B cell (primary cell): ENCODE measurements at regions of chr3 and their contacts with region 1.

Region 1: GRCh38 chr3:67018105-67018788 is 20.1 kb downstream of the KBTBD8 start:
- DNase-seq: peak; percentile 17
- ATAC-seq: peak; percentile 24
- H3K4me3 ChIP-seq: peak overlapping the region in 1 of 5 experiments; percentile 37
- H3K4me3 Mint-ChIP-seq: peak overlapping the region; percentile 63
- H3K27ac ChIP-seq: peak overlapping the region; percentile 36 to 64
- H3K27ac Mint-ChIP-seq: peak overlapping the region; percentile 70
- H3K4me1 ChIP-seq: peaks cover 43 to 46% of the 10 kb centered on the region in 2 donors
- H3K4me1 Mint-ChIP-seq: peaks cover 54% of the 10 kb centered on the region
- H3K27me3 ChIP-seq: no peaks in the 10 kb centered on the region
- H3K27me3 Mint-ChIP-seq: no peaks in the 10 kb centered on the region
- CTCF ChIP-seq: no peak

Region 2: DNA sequence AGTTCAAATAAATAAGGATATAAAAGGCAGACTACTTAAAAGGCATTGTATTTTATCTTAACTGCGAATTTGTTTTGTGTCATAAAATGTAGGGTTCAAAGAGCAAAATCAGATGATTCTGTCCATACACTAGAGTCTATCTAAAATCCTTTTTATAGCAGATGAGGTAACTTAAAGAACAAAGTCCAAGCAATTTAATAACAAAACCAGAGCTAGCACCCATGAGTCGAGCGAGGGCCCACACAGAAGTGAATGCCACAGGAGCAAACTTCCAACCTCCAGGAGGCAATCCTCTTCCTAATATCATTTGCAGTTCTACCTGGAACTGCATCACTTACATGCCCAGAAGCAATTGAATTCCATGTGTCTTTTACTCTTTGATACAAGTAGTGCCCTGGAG is 55.6 kb before region 1 on chr3:
- CTCF ChIA-PET with region 1: no interaction called
- POLR2A ChIA-PET with region 1: no interaction called
- intact Hi-C with region 1: no loop called
- DNase-seq: no peak
- ATAC-seq: no peak
- H3K4me3 ChIP-seq: no peak overlapping the region
- H3K4me3 Mint-ChIP-seq: no peak overlapping the region
- H3K27ac ChIP-seq: no peak overlapping the region
- H3K27ac Mint-ChIP-seq: no peak overlapping the region
- H3K4me1 ChIP-seq: no peaks in the 10 kb centered on the region
- H3K4me1 Mint-ChIP-seq: no peaks in the 10 kb centered on the region
- H3K27me3 ChIP-seq: no peaks in the 10 kb centered on the region
- H3K27me3 Mint-ChIP-seq: peaks cover 17% of the 10 kb centered on the region
- CTCF ChIP-seq: no peak

Region 3: GRCh38 chr3:67006460-67006859 is 11.8 kb before region 1 on chr3:
- CTCF ChIA-PET with region 1: interaction called, 8 read pairs
- POLR2A ChIA-PET with region 1: interaction called, 4 read pairs
- intact Hi-C with region 1: loop called (anchors 1 kb)
- DNase-seq: no peak
- ATAC-seq: no peak
- H3K4me3 ChIP-seq: peak overlapping the region in 1 of 5 experiments; percentile 28
- H3K4me3 Mint-ChIP-seq: peak overlapping the region; percentile 63
- H3K27ac ChIP-seq: no peak overlapping the region
- H3K27ac Mint-ChIP-seq: peak overlapping the region; percentile 46
- H3K4me1 ChIP-seq: peaks cover 26 to 53% of the 10 kb centered on the region in 2 donors
- H3K4me1 Mint-ChIP-seq: peaks cover 79% of the 10 kb centered on the region
- H3K27me3 ChIP-seq: no peaks in the 10 kb centered on the region
- H3K27me3 Mint-ChIP-seq: no peaks in the 10 kb centered on the region
- CTCF ChIP-seq: no peak

Region 4: DNA sequence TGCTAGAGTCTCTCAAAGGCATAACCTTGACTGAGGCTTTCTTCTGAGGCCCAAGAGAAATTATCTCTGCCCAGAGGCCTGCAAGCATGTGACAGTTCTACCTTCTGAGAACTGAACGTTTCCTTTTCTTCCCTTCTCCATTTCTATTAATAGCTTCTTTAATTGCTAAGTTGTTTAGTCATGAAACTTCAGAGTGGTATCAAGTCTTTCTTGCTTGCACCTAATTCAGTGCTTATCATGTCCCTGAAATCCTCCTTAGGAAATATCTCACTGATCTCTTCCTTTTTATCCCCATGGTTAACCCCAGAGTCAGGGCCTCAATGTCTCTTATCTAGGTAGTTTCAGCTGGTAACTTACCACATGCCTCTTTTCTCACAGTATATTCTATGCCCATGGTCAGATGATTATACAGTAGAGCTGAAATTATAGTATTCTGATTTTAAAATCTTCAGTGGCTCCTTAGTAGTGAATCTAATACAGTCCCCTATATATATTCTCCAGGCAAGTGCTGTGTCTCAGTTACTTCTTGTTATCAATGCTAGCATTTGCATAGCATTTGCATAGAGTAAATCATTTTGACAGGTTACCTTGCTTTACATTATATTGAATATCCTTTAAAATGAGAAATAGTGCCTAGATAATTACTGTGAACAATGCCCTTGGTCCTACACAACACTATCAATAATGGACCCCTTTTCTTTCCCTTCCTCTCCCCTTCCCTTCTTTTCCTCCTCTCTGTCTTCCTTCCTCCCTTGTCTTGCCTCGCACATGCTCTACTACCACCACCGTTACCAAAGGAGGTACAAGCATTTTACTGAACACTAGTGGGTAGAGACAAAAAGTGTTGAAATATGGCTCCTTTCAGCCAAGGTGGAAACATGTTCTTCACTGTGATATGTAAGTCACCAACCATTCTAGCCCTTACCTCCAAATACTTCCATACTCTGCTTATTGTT is 12.8 kb after region 1 on chr3:
- CTCF ChIA-PET with region 1: interaction called, 3 read pairs
- POLR2A ChIA-PET with region 1: no interaction called
- intact Hi-C with region 1: loop called (anchors 2 kb)
- DNase-seq: no peak
- ATAC-seq: no peak
- H3K4me3 ChIP-seq: no peak overlapping the region
- H3K4me3 Mint-ChIP-seq: no peak overlapping the region
- H3K27ac ChIP-seq: no peak overlapping the region
- H3K27ac Mint-ChIP-seq: peak overlapping the region; percentile 33
- H3K4me1 ChIP-seq: peaks cover 10 to 16% of the 10 kb centered on the region in 2 donors
- H3K4me1 Mint-ChIP-seq: peaks cover 24% of the 10 kb centered on the region
- H3K27me3 ChIP-seq: no peaks in the 10 kb centered on the region
- H3K27me3 Mint-ChIP-seq: no peaks in the 10 kb centered on the region
- CTCF ChIP-seq: no peak

Region 5: GRCh38 chr3:67377299-67377698 is 359.1 kb after region 1 on chr3:
- CTCF ChIA-PET with region 1: no interaction called
- POLR2A ChIA-PET with region 1: no interaction called
- intact Hi-C with region 1: no loop called
- DNase-seq: no peak
- ATAC-seq: no peak
- H3K4me3 ChIP-seq: no peak overlapping the region
- H3K4me3 Mint-ChIP-seq: no peak overlapping the region
- H3K27ac ChIP-seq: no peak overlapping the region
- H3K27ac Mint-ChIP-seq: no peak overlapping the region
- H3K4me1 ChIP-seq: no peaks in the 10 kb centered on the region
- H3K4me1 Mint-ChIP-seq: no peaks in the 10 kb centered on the region
- H3K27me3 ChIP-seq: no peaks in the 10 kb centered on the region
- H3K27me3 Mint-ChIP-seq: no peaks in the 10 kb centered on the region
- CTCF ChIP-seq: no peak